CD4-positive, alpha-beta T cell (primary cell): ENCODE measurements at regions of chr2 and their contacts with region 1.

Region 1: GRCh38 chr2:161160226-161161069 is at the start of gene TANK:
- DNase-seq: peak; percentile 80 to 96 (median 86)
- ATAC-seq: peak; percentile 88
- H3K4me3 ChIP-seq: peak within 1 kb of the TSS; percentile 92
- H3K4me3 Mint-ChIP-seq: peak within 1 kb of the TSS; percentile 93
- H3K27ac ChIP-seq: peak within 1 kb of the TSS; percentile 92 to 96
- H3K27ac Mint-ChIP-seq: peak within 1 kb of the TSS; percentile 89
- H3K4me1 ChIP-seq: peaks cover 2% of the 10 kb centered on the region
- H3K4me1 Mint-ChIP-seq: peaks cover 63% of the 10 kb centered on the region
- H3K27me3 ChIP-seq: no peaks in the 10 kb centered on the region
- H3K27me3 Mint-ChIP-seq: no peaks in the 10 kb centered on the region
- CTCF ChIP-seq: no peak
- total RNA-seq, gene TANK: 66.3 to 71.7 TPM

Region 2: DNA sequence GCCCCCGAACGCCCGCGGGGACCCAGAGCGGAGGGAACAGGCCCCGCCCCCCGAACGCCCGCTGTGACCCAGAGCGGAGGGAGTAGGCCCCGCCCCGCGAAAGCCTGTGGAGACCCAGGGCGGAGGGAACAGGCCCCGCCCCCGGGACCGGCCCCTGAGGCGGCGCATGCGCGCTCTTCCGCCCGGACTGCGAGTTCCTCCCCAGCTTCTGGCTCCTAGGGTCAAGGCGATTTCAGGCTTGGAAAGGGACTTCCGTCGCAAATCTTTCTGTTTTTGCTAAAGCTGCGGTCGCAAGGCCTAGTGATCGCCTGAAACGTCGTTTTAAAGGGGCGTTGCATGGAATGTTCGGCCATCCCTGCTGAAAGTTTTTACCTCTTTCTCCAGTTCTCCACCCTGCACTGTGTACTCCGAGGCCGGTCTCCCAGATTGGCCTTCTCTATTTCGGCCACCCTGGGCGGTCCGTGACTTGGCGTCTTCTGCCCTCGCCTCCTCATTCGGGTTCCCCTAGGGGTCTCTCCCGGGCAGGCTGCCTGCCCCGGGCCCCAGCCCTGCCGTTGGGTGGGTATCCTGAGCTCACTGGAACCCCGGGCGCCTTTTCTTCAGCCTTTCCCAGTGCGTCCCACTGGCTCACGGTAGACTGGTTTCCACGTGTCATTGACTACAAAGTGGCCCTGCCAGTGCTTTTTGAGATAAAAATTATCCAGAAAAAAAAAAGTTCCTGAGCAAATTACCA is 1873.6 kb before region 1 on chr2:
- CTCF ChIA-PET with region 1: no interaction called
- POLR2A ChIA-PET with region 1: no interaction called
- intact Hi-C with region 1: loop called in 1 of 2 experiments (anchors 10 kb)
- DNase-seq: peak; percentile 93 to 100 (median 97)
- ATAC-seq: peak; percentile 98
- H3K4me3 ChIP-seq: peak overlapping the region; percentile 88
- H3K4me3 Mint-ChIP-seq: peak overlapping the region; percentile 90
- H3K27ac ChIP-seq: peak overlapping the region in 1 of 2 donors; percentile 69
- H3K27ac Mint-ChIP-seq: peak overlapping the region; percentile 77
- H3K4me1 ChIP-seq: peaks cover 24% of the 10 kb centered on the region
- H3K4me1 Mint-ChIP-seq: peaks cover 46% of the 10 kb centered on the region
- H3K27me3 ChIP-seq: no peaks in the 10 kb centered on the region
- H3K27me3 Mint-ChIP-seq: no peaks in the 10 kb centered on the region
- CTCF ChIP-seq: no peak

Region 3: DNA sequence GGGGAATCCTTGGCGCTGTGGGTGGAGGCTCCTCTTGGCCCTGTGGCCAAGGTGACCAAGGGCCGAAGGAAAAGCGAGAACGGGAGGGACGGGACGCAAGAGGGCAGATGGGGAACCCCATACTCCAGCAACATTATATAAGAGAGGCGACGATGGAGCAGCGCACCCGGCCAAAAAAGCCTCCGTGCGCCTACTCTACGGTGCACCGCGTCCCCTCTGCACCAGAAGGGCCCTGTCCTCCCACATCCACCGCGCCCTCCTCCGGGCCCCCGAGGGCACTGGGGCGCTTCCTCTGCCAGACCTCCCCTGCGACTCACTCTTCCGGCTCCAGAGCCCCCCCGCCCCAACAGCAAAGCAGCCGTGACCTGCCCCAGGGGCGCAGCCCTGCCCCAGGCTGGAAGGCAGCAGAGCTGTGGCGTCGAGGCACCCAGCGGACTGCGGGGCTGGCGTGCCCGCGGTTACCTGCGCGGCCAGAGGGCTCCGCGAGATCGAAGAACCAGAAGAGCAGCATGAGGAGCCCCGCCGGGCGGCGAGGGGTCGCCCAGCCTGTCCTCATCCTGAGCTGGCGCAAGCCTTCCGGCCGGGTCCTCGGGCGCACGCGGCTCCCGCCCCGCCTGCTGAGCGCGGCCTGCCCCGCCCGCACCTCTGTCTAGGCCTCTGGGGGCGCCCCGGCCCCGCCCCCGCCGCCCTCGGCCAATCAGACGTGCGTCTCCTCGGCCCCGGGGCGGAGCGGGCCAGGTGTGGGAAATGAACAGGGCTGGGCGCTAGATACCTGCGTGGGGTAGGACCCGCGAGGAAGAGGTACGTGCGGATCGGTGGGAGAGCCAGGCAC is 1256.1 kb before region 1 on chr2:
- CTCF ChIA-PET with region 1: no interaction called
- POLR2A ChIA-PET with region 1: no interaction called
- intact Hi-C with region 1: loop called in 1 of 2 experiments (anchors 10 kb)
- DNase-seq: peak; percentile 64 to 91 (median 80)
- ATAC-seq: peak; percentile 81
- H3K4me3 ChIP-seq: peak within 1 kb of the TSS; percentile 97
- H3K4me3 Mint-ChIP-seq: peak within 1 kb of the TSS; percentile 99
- H3K27ac ChIP-seq: peak within 1 kb of the TSS; percentile 73 to 91
- H3K27ac Mint-ChIP-seq: peak within 1 kb of the TSS; percentile 93
- H3K4me1 ChIP-seq: peaks cover 31% of the 10 kb centered on the region
- H3K4me1 Mint-ChIP-seq: peaks cover 39% of the 10 kb centered on the region
- H3K27me3 ChIP-seq: no peaks in the 10 kb centered on the region
- H3K27me3 Mint-ChIP-seq: no peaks in the 10 kb centered on the region
- CTCF ChIP-seq: no peak

Region 4: DNA sequence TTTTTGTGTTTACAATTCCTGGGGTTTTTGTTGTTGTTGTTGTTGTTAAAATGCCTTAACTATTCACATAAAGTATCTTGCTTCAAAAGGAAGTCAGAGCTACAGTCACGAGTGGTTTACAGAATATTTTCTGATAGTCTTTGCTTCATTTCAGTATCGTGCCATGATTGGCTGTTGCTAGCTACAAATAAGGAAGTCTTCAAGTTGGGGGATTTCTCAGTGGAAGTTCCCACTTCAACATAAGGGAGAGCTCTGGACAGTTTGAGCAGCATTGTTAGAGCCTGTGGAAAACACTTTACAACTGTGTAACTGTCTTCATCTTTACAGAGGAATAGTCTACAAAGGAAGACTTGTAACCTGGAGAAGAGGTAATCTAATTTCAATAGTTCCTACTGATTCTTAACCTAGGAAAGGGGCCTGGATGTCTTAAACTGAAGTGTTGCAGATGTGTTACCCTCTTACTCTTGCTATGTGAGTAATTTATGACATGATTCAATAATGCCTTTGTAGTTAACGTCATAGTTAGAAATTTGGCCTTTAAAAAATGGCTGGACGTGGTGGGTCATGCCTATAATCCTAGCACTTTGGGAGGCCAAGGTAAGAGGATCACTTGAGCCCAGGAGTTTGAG is 23.6 kb before region 1 on chr2:
- CTCF ChIA-PET with region 1: interaction called, 5 read pairs
- POLR2A ChIA-PET with region 1: interaction called, 9 read pairs
- intact Hi-C with region 1: loop called (anchors 2 kb)
- DNase-seq: peak in 6 of 14 experiments; percentile 11 to 93 (median 52)
- ATAC-seq: peak; percentile 88
- H3K4me3 ChIP-seq: peak overlapping the region; percentile 62
- H3K4me3 Mint-ChIP-seq: peak overlapping the region; percentile 87
- H3K27ac ChIP-seq: peak overlapping the region; percentile 76 to 91
- H3K27ac Mint-ChIP-seq: peak overlapping the region; percentile 89
- H3K4me1 ChIP-seq: peaks cover 16% of the 10 kb centered on the region
- H3K4me1 Mint-ChIP-seq: peaks cover 60% of the 10 kb centered on the region
- H3K27me3 ChIP-seq: no peaks in the 10 kb centered on the region
- H3K27me3 Mint-ChIP-seq: no peaks in the 10 kb centered on the region
- CTCF ChIP-seq: no peak

Region 5: DNA sequence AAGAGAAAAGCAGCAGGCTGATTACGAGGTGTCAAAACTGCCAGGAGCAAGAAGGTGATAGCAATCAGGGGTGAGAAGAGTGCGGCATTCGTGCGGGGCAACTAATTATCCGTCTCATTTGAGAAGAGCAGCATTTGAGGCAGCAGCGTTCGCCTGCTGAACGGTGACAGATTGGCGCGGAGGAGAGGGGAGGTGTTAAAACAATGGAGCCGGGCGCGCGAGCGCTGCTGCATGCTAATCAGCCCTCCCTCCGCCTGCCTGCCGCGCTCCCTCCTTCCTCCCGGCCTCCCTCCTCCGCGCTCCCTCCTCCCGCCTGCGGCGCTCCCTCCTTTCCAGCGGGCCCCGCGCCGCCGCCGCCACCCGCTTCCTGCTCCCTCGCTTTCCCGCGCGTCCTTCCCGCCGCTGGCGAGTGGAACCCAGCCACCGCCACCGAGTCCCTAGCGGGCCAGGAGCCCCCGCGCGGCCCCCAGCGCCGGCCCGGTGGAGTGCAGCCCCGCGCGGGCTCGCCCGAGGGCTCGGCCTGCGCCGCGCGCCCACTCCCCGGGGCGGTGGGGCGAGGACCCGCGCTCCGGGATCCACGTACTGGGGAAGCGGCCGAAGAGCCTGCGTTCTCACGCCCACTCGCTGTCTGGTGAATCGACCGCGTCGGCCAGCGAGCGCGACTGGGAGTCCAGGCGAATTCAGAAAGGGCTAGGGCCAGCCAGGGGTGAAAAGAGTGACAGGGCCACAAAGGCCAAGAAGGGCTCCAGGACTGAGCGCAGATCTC is 78.3 kb after region 1 on chr2:
- CTCF ChIA-PET with region 1: no interaction called
- POLR2A ChIA-PET with region 1: interaction called, 3 read pairs
- intact Hi-C with region 1: loop called in 1 of 2 experiments (anchors 5 kb)
- DNase-seq: peak; percentile 40 to 83 (median 56)
- ATAC-seq: peak; percentile 75
- H3K4me3 ChIP-seq: peak overlapping the region; percentile 56
- H3K4me3 Mint-ChIP-seq: peak overlapping the region; percentile 90
- H3K27ac ChIP-seq: no peak overlapping the region
- H3K27ac Mint-ChIP-seq: peak overlapping the region; percentile 70
- H3K4me1 ChIP-seq: peaks cover 30% of the 10 kb centered on the region
- H3K4me1 Mint-ChIP-seq: peaks cover 61% of the 10 kb centered on the region
- H3K27me3 ChIP-seq: no peaks in the 10 kb centered on the region
- H3K27me3 Mint-ChIP-seq: no peaks in the 10 kb centered on the region
- CTCF ChIP-seq: no peak

Region 6: GRCh38 chr2:161308178-161308955 is 147.9 kb after region 1 on chr2 and contains the start of gene PSMD14:
- CTCF ChIA-PET with region 1: no interaction called
- POLR2A ChIA-PET with region 1: no interaction called
- intact Hi-C with region 1: loop called in 1 of 2 experiments (anchors 5 kb)
- DNase-seq: peak; percentile 74 to 94 (median 83)
- ATAC-seq: peak; percentile 91
- H3K4me3 ChIP-seq: peak within 1 kb of the TSS; percentile 81
- H3K4me3 Mint-ChIP-seq: peak within 1 kb of the TSS; percentile 98
- H3K27ac ChIP-seq: peak within 1 kb of the TSS; percentile 59 to 78
- H3K27ac Mint-ChIP-seq: peak within 1 kb of the TSS; percentile 93
- H3K4me1 ChIP-seq: peaks cover 5% of the 10 kb centered on the region
- H3K4me1 Mint-ChIP-seq: peaks cover 48% of the 10 kb centered on the region
- H3K27me3 ChIP-seq: no peaks in the 10 kb centered on the region
- H3K27me3 Mint-ChIP-seq: no peaks in the 10 kb centered on the region
- CTCF ChIP-seq: no peak
- total RNA-seq, gene PSMD14: 17.1 to 22.1 TPM

Region 7: DNA sequence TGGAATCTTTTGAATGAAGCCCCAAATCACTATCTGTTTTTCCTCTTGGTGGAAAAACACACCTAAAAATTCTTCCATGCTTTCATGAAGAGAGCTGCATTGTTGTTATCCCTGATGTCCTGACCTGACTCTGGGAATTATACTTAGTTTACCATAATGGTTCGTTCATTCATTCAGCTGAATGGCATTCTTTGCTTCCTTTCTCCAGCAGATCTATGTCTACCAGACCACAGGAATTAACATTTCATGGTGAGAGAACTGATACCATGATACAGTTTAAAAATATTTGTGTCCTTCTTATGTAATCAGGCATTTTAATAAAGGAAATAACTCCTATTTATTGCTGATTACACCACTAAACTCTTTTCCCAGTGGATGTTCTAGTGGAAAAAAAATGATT is 452.7 kb after region 1 on chr2:
- CTCF ChIA-PET with region 1: no interaction called
- POLR2A ChIA-PET with region 1: no interaction called
- intact Hi-C with region 1: no loop called
- DNase-seq: no peak
- ATAC-seq: no peak
- H3K4me3 ChIP-seq: no peak overlapping the region
- H3K4me3 Mint-ChIP-seq: no peak overlapping the region
- H3K27ac ChIP-seq: no peak overlapping the region
- H3K27ac Mint-ChIP-seq: no peak overlapping the region
- H3K4me1 ChIP-seq: no peaks in the 10 kb centered on the region
- H3K4me1 Mint-ChIP-seq: no peaks in the 10 kb centered on the region
- H3K27me3 ChIP-seq: peaks cover 5 to 13% of the 10 kb centered on the region in 2 experiments
- H3K27me3 Mint-ChIP-seq: peaks cover 39% of the 10 kb centered on the region
- CTCF ChIP-seq: no peak